ENCODE measurements at regions of chr9 and their contacts with region 1.

Region 1: GRCh38 chr9:95726756-95727155 is 148.7 kb upstream of the ERCC6L2 start:
- DNase-seq: peak in 2 of 9 experiments; percentile 39 to 55
- ATAC-seq: no peak
- H3K4me3 ChIP-seq: no peak overlapping the region
- H3K4me3 Mint-ChIP-seq: no peak overlapping the region
- H3K27ac ChIP-seq: no peak overlapping the region
- H3K27ac Mint-ChIP-seq: no peak overlapping the region
- H3K4me1 ChIP-seq: peaks cover 28% of the 10 kb centered on the region
- H3K4me1 Mint-ChIP-seq: peaks cover 47% of the 10 kb centered on the region
- H3K27me3 ChIP-seq: no peaks in the 10 kb centered on the region
- H3K27me3 Mint-ChIP-seq: peaks cover 2% of the 10 kb centered on the region
- CTCF ChIP-seq: peak; percentile 46

Region 2: GRCh38 chr9:95317119-95317892 is 409.4 kb before region 1 on chr9 and contains the start of gene FANCC:
- CTCF ChIA-PET with region 1: no interaction called
- POLR2A ChIA-PET with region 1: no interaction called
- intact Hi-C with region 1: loop called in 1 of 2 experiments (anchors 1 kb)
- DNase-seq: peak; percentile 71 to 93 (median 85)
- ATAC-seq: peak; percentile 79
- H3K4me3 ChIP-seq: peak within 1 kb of the TSS; percentile 87 to 99
- H3K4me3 Mint-ChIP-seq: peak within 1 kb of the TSS; percentile 94
- H3K27ac ChIP-seq: peak within 1 kb of the TSS; percentile 75 to 78
- H3K27ac Mint-ChIP-seq: peak within 1 kb of the TSS; percentile 91
- H3K4me1 ChIP-seq: peaks cover 12% of the 10 kb centered on the region
- H3K4me1 Mint-ChIP-seq: peaks cover 22% of the 10 kb centered on the region
- H3K27me3 ChIP-seq: no peaks in the 10 kb centered on the region
- H3K27me3 Mint-ChIP-seq: peaks cover 4% of the 10 kb centered on the region
- CTCF ChIP-seq: no peak
- total RNA-seq, gene FANCC: 4.2 to 6.1 TPM

Region 3: GRCh38 chr9:95462249-95463147 is 264.3 kb before region 1 on chr9:
- CTCF ChIA-PET with region 1: no interaction called
- POLR2A ChIA-PET with region 1: no interaction called
- intact Hi-C with region 1: loop called in 1 of 2 experiments (anchors 1 kb)
- DNase-seq: peak; percentile 50 to 93 (median 67)
- ATAC-seq: peak; percentile 96
- H3K4me3 ChIP-seq: peak overlapping the region; percentile 32 to 36
- H3K4me3 Mint-ChIP-seq: peak overlapping the region; percentile 85
- H3K27ac ChIP-seq: no peak overlapping the region
- H3K27ac Mint-ChIP-seq: peak overlapping the region; percentile 84
- H3K4me1 ChIP-seq: peaks cover 25% of the 10 kb centered on the region
- H3K4me1 Mint-ChIP-seq: peaks cover 34% of the 10 kb centered on the region
- H3K27me3 ChIP-seq: no peaks in the 10 kb centered on the region
- H3K27me3 Mint-ChIP-seq: peaks cover 4% of the 10 kb centered on the region
- CTCF ChIP-seq: no peak

Region 4: GRCh38 chr9:95772320-95773052 is 45.7 kb after region 1 on chr9:
- CTCF ChIA-PET with region 1: interaction called, 4 read pairs
- POLR2A ChIA-PET with region 1: no interaction called
- intact Hi-C with region 1: loop called in 1 of 2 experiments (anchors 10 kb)
- DNase-seq: peak in 5 of 9 experiments; percentile 44 to 65 (median 55)
- ATAC-seq: peak; percentile 66
- H3K4me3 ChIP-seq: peak overlapping the region; percentile 3 to 40
- H3K4me3 Mint-ChIP-seq: peak overlapping the region; percentile 71
- H3K27ac ChIP-seq: peak overlapping the region in 1 of 2 experiments; percentile 60
- H3K27ac Mint-ChIP-seq: peak overlapping the region; percentile 78
- H3K4me1 ChIP-seq: peaks cover 23% of the 10 kb centered on the region
- H3K4me1 Mint-ChIP-seq: peaks cover 17% of the 10 kb centered on the region
- H3K27me3 ChIP-seq: no peaks in the 10 kb centered on the region
- H3K27me3 Mint-ChIP-seq: peaks cover 4% of the 10 kb centered on the region
- CTCF ChIP-seq: no peak

Region 5: GRCh38 chr9:95887926-95888497 is 161.3 kb after region 1 on chr9:
- CTCF ChIA-PET with region 1: no interaction called
- POLR2A ChIA-PET with region 1: no interaction called
- intact Hi-C with region 1: loop called in 1 of 2 experiments (anchors 5 kb)
- DNase-seq: peak in 2 of 9 experiments; percentile 39 to 69
- ATAC-seq: peak; percentile 80
- H3K4me3 ChIP-seq: peak overlapping the region in 1 of 2 experiments; percentile 25
- H3K4me3 Mint-ChIP-seq: peak overlapping the region; percentile 71
- H3K27ac ChIP-seq: peak overlapping the region; percentile 14 to 63
- H3K27ac Mint-ChIP-seq: peak overlapping the region; percentile 88
- H3K4me1 ChIP-seq: peaks cover 80% of the 10 kb centered on the region
- H3K4me1 Mint-ChIP-seq: peaks cover 79% of the 10 kb centered on the region
- H3K27me3 ChIP-seq: no peaks in the 10 kb centered on the region
- H3K27me3 Mint-ChIP-seq: no peaks in the 10 kb centered on the region
- CTCF ChIP-seq: no peak

Region 6: DNA sequence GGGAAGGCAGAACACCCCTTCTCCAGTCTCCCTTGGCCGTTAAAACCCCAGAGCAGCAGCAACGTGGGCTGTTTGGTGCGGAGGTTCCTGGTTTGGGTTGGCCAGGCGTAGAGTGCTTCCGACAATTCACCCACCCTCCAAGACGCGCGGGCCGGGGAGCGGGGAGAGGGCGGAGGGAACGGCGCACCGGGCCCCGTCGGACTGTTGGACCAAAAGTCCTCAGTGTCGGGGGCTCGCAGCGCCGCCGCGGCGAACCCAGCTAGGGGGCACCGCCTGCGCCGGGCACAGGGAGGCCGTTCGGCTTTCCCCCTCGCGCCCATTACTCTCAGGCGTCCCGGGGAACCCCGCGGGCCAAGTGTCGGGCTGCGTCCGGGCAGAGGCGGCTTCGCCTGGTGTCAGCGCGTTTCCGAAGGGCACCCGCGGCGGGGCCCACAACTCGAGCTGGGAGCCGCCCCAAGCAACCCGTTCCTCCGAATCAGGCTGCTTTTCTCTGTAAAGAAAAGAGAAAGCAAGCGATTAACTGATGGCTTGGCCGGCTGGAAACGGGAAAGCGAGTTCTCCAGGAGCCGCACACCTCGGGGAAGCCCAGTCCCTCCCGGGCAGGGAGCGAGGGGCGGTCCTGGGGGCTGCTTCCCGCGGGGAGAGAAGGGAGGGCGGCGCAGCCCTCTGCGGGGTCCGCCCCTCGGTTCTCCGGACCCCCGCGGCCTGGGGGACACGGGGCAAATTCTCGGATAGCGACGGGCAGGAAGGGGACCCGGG is 294.2 kb after region 1 on chr9:
- CTCF ChIA-PET with region 1: interaction called, 3 read pairs
- POLR2A ChIA-PET with region 1: no interaction called
- intact Hi-C with region 1: loop called (anchors 5 to 10 kb)
- DNase-seq: peak in 7 of 9 experiments; percentile 39 to 72 (median 61)
- ATAC-seq: peak; percentile 43
- H3K4me3 ChIP-seq: peak overlapping the region; percentile 61 to 69
- H3K4me3 Mint-ChIP-seq: peak overlapping the region; percentile 90
- H3K27ac ChIP-seq: peak overlapping the region; percentile 74 to 80
- H3K27ac Mint-ChIP-seq: peak overlapping the region; percentile 89
- H3K4me1 ChIP-seq: peaks cover 54% of the 10 kb centered on the region
- H3K4me1 Mint-ChIP-seq: peaks cover 74% of the 10 kb centered on the region
- H3K27me3 ChIP-seq: no peaks in the 10 kb centered on the region
- H3K27me3 Mint-ChIP-seq: no peaks in the 10 kb centered on the region
- CTCF ChIP-seq: no peak

Region 7: GRCh38 chr9:96217754-96218693 is 491.3 kb after region 1 on chr9:
- CTCF ChIA-PET with region 1: interaction called, 3 read pairs
- POLR2A ChIA-PET with region 1: no interaction called
- intact Hi-C with region 1: loop called in 1 of 2 experiments (anchors 5 kb)
- DNase-seq: peak; percentile 48 to 88 (median 77)
- ATAC-seq: peak; percentile 81
- H3K4me3 ChIP-seq: peak overlapping the region; percentile 9 to 27
- H3K4me3 Mint-ChIP-seq: peak overlapping the region; percentile 80
- H3K27ac ChIP-seq: no peak overlapping the region
- H3K27ac Mint-ChIP-seq: no peak overlapping the region
- H3K4me1 ChIP-seq: peaks cover 8% of the 10 kb centered on the region
- H3K4me1 Mint-ChIP-seq: peaks cover 12% of the 10 kb centered on the region
- H3K27me3 ChIP-seq: peaks cover 0 to 8% of the 10 kb centered on the region in 2 experiments
- H3K27me3 Mint-ChIP-seq: peaks cover 37% of the 10 kb centered on the region
- CTCF ChIP-seq: peak; percentile 98

Measured in CD8-positive, alpha-beta T cell (primary cell).